Activated CD8-positive, alpha-beta T cell treated with anti-CD3 and anti-CD28 coated beads for 36 hours (primary cell): ENCODE measurements at regions of chr12 and their contacts with region 1.

Region 1: DNA sequence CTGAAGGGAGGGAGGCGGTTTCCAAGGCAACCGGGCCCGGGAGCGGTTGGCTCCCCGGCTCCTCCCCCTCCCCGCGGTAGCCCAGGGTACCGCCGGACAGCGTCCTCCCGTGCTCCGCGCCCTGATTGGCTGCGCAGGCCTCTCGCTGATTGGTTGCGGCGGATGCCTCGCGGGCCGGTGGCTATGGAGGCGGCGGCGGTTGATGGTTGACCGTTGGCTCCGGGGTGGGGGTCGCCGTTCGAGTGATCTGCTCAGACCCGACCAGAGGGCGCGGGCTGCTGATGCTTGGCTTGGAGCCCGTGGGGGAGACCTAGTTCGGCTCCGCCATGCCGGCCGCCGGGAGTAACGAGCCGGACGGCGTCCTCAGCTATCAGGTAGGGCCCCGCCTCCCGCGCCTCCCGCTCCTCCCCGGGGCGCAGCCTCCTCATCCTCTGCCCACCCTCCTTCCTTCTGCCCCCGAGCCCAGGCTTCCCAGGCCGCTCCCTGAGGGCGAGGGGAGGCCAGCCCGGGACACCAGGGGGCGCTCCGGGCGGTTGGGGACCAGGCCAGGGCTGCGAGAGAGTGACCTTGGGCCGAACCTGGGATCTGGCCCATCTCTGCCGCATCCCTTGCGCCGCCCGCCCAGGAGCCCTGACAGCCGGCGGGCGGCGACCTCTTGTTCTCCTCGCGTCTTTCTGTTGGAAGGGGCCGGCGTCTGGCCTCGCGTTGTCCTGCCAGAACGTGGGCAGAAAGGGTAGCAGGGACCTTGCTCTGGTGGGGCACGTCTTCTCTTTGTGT is at the start of gene SLC4A8:
- DNase-seq: peak; percentile 90
- ATAC-seq: peak; percentile 95
- H3K4me3 Mint-ChIP-seq: peak within 1 kb of the TSS; percentile 69
- H3K27ac Mint-ChIP-seq: no peak within 1 kb of the TSS
- H3K4me1 Mint-ChIP-seq: peaks cover 9% of the 10 kb centered on the region
- H3K27me3 Mint-ChIP-seq: no peaks in the 10 kb centered on the region
- CTCF ChIP-seq: peak; percentile 92
- total RNA-seq, gene SLC4A8: 1.1 to 2.7 TPM

Region 2: GRCh38 chr12:51391283-51392162 is 33.3 kb before region 1 on chr12 and contains the start of gene GALNT6:
- CTCF ChIA-PET with region 1: interaction called, 12 read pairs
- POLR2A ChIA-PET with region 1: no interaction called
- intact Hi-C with region 1: no loop called
- DNase-seq: peak; percentile 75
- ATAC-seq: peak; percentile 47
- H3K4me3 Mint-ChIP-seq: peak within 1 kb of the TSS; percentile 89
- H3K27ac Mint-ChIP-seq: peak within 1 kb of the TSS; percentile 78
- H3K4me1 Mint-ChIP-seq: peaks cover 74% of the 10 kb centered on the region
- H3K27me3 Mint-ChIP-seq: no peaks in the 10 kb centered on the region
- CTCF ChIP-seq: no peak
- total RNA-seq, gene GALNT6: 18.0 to 22.3 TPM

Region 3: DNA sequence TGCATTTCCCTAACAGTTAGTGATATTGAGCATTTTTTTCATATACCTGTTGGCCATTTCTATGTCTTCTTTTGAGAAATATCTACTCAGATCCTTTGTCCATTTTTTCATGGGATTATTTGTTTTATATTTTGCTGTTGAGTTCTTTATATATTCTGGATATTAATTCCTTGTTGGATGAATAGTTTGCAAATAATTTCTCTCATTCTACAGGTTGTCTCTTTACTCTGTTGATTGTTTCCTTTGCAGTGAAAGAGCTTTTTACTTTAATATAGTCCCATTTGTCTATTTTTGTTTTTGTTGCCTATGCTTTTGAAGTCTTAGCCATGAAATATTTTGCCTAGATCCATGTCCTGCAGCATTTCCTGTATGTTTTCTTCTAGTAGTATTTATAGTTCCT is 11.7 kb before region 1 on chr12:
- CTCF ChIA-PET with region 1: interaction called, 10 read pairs
- POLR2A ChIA-PET with region 1: no interaction called
- intact Hi-C with region 1: no loop called
- DNase-seq: no peak
- ATAC-seq: no peak
- H3K4me3 Mint-ChIP-seq: no peak overlapping the region
- H3K27ac Mint-ChIP-seq: no peak overlapping the region
- H3K4me1 Mint-ChIP-seq: peaks cover 4% of the 10 kb centered on the region
- H3K27me3 Mint-ChIP-seq: peaks cover 2% of the 10 kb centered on the region
- CTCF ChIP-seq: no peak

Region 4: DNA sequence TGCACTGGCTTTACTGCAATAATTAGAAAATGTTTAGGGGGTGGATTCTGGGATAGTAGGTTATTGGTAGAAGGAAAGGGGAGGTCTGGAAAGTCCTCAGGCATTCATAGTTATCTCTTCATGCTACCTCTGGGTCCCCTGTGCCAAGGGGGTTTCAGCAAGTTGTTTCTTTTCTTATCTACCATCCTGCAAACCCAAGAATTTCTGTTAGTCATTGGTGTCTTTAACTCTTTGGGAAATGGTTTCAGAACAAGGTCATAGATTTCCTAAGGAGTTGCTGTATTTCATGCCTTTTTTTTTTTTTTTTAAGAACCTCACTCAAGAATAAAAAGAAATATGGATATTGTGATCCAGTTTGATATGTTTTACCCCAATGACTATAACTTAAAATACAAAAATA is 63.4 kb after region 1 on chr12:
- CTCF ChIA-PET with region 1: no interaction called
- POLR2A ChIA-PET with region 1: no interaction called
- intact Hi-C with region 1: no loop called
- DNase-seq: no peak
- ATAC-seq: no peak
- H3K4me3 Mint-ChIP-seq: no peak overlapping the region
- H3K27ac Mint-ChIP-seq: no peak overlapping the region
- H3K4me1 Mint-ChIP-seq: peaks cover 17% of the 10 kb centered on the region
- H3K27me3 Mint-ChIP-seq: no peaks in the 10 kb centered on the region
- CTCF ChIP-seq: no peak